ENCODE measurements at regions of chr13 and their contacts with region 1.

Region 1: DNA sequence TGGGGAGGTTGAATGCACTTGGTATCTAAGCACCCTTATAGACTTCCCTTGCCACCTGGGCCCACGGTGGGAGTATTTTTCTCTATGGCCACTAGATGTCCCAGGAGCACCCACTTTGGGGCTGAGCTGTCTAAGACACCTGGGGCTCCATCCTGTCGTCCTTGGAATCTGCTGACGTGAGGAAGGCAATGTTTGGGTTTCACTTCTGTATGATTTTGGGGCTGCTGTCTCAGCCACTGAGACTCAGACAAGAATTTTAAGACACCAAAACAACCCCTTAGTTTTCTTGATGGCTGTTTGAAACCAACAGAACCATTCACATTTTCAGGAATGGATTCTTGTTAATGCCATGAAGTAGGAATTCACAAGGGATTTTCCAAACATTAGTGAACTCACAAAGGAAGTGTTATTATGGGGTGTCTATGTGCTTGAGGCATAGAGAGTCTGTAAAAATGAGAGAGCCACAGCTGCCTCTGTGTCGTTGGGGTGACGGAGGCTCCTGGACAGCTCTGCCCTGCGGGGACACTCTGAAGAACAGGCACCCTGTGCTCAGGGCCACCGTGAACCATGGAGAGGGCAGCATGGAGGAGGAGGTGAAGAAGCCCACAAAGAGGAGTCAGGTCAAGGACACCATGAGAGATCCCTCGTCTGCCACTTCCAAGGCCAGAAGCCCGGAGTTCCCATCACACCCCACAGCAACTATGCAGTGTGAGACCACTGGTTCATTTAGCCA is 106.8 kb upstream of the SPATA13 start:
- DNase-seq: peak; percentile 80
- H3K4me3 Mint-ChIP-seq: no peak overlapping the region
- H3K27ac Mint-ChIP-seq: no peak overlapping the region
- H3K4me1 Mint-ChIP-seq: peaks cover 10% of the 10 kb centered on the region
- H3K27me3 Mint-ChIP-seq: peaks cover 2% of the 10 kb centered on the region

Region 2: GRCh38 chr13:23921451-23921888 is 132.2 kb before region 1 on chr13:
- CTCF ChIA-PET with region 1: interaction called, 3 read pairs
- intact Hi-C with region 1: loop called (anchors 1 kb)
- DNase-seq: peak; percentile 16
- H3K4me3 Mint-ChIP-seq: no peak overlapping the region
- H3K27ac Mint-ChIP-seq: no peak overlapping the region
- H3K4me1 Mint-ChIP-seq: no peaks in the 10 kb centered on the region
- H3K27me3 Mint-ChIP-seq: peaks cover 32% of the 10 kb centered on the region

Region 3: GRCh38 chr13:23966691-23967615 is 86.7 kb before region 1 on chr13:
- CTCF ChIA-PET with region 1: no interaction called
- intact Hi-C with region 1: no loop called
- DNase-seq: peak; percentile 38
- H3K4me3 Mint-ChIP-seq: peak overlapping the region; percentile 29
- H3K27ac Mint-ChIP-seq: peak overlapping the region; percentile 72
- H3K4me1 Mint-ChIP-seq: peaks cover 29% of the 10 kb centered on the region
- H3K27me3 Mint-ChIP-seq: no peaks in the 10 kb centered on the region

Region 4: GRCh38 chr13:23980160-23980551 is 73.5 kb before region 1 on chr13:
- CTCF ChIA-PET with region 1: no interaction called
- intact Hi-C with region 1: no loop called
- DNase-seq: peak; percentile 84
- H3K4me3 Mint-ChIP-seq: peak overlapping the region; percentile 76
- H3K27ac Mint-ChIP-seq: no peak overlapping the region
- H3K4me1 Mint-ChIP-seq: peaks cover 10% of the 10 kb centered on the region
- H3K27me3 Mint-ChIP-seq: peaks cover 18% of the 10 kb centered on the region

Region 5: GRCh38 chr13:24005755-24006281 is 47.9 kb before region 1 on chr13:
- CTCF ChIA-PET with region 1: no interaction called
- intact Hi-C with region 1: no loop called
- DNase-seq: no peak
- H3K4me3 Mint-ChIP-seq: no peak overlapping the region
- H3K27ac Mint-ChIP-seq: no peak overlapping the region
- H3K4me1 Mint-ChIP-seq: no peaks in the 10 kb centered on the region
- H3K27me3 Mint-ChIP-seq: no peaks in the 10 kb centered on the region

Region 6: DNA sequence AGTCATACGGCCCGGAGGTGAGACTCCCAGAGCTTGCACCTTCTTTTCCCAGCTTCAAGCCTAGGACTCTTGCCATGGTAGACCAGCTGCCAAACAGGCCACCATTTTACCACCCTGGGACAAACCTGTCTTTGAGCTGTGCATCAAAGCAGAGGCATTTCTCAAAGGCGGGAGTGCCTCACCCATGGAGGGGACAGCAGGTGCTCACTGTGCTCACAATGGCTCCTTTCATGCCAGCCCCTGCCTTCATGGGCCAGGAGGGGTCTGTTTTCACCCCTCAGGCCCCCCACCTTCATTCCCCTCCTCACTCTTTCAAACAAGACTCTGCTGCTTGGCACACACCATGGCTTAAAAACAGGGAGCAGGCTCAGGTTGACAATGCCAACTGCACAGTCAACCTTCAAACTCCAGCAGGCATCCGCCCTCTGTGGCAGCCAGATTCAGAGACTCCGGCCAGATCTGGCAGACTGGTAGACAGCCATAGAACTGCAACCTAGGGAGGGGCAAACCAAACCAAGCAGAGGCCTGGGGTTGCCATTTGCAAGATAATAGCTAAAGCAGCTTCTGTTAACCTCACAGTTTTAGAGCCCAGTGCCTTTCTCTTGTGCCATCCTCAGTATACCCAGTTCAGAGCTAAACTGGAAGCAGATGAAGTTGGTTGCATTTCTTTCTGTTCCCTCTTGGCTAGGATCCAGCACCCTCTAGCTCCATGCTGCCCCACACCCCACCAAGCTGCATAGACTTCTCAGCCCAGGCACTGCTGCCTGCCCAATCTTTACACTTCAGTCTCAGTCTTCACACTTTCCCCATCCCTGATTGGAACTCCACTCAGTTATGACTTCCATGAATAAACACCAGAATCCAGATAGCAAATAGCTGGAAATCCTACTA is 13.0 kb after region 1 on chr13:
- CTCF ChIA-PET with region 1: interaction called, 20 read pairs
- intact Hi-C with region 1: no loop called
- DNase-seq: no peak
- H3K4me3 Mint-ChIP-seq: no peak overlapping the region
- H3K27ac Mint-ChIP-seq: no peak overlapping the region
- H3K4me1 Mint-ChIP-seq: peaks cover 13% of the 10 kb centered on the region
- H3K27me3 Mint-ChIP-seq: no peaks in the 10 kb centered on the region

Region 7: DNA sequence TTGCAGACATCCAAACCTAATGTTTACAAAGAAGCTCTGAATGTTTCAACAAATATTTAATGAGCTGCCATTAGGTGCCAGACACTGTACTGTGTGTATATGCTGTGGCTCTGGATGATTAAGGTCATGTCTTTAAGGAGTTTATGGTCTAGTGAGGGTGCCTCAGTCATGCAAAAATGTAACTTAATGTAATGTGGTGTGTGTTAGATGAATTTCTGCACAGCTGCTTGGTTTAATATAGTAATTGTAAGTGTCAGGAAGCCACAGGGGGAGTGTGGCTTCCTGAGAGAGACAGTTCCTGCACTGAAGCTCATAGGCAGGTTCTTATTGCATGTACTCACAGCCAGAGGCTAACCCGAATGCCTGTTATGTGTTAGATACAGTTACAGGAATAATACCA is 150.1 kb after region 1 on chr13:
- CTCF ChIA-PET with region 1: interaction called, 10 read pairs
- intact Hi-C with region 1: no loop called
- DNase-seq: no peak
- H3K4me3 Mint-ChIP-seq: no peak overlapping the region
- H3K27ac Mint-ChIP-seq: no peak overlapping the region
- H3K4me1 Mint-ChIP-seq: peaks cover 22% of the 10 kb centered on the region
- H3K27me3 Mint-ChIP-seq: no peaks in the 10 kb centered on the region

Region 8: DNA sequence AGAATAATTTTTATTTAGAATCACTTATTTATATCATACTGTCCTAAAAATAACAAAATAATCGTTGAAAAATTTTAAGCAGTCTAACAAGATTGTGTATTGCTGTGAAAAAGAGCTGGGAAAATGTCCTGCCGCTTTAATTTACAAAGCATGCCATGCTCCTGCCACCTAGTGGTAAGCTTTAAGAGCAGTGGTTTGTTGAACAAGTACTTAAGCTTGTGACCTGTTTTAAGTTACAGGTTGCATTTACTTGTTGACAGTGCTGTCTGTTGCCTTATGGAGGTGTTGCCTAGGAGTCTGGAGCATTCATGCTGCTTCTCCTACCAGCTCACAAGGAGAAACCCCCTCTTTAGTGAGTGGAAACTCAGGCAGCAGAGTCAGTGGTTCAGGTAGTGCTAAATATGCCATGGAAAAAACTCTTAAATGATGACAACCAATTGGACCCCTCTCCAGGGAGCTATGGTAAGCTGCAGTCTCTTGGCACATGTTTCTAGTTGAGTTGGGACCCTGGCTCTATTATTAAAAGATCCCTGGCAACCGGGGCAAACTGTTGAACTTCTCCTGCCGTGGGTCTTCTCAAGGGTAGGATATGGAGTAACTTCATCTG is 175.3 kb after region 1 on chr13:
- CTCF ChIA-PET with region 1: interaction called, 22 read pairs
- intact Hi-C with region 1: loop called (anchors 2 kb)
- DNase-seq: peak; percentile 63
- H3K4me3 Mint-ChIP-seq: no peak overlapping the region
- H3K27ac Mint-ChIP-seq: no peak overlapping the region
- H3K4me1 Mint-ChIP-seq: peaks cover 34% of the 10 kb centered on the region
- H3K27me3 Mint-ChIP-seq: no peaks in the 10 kb centered on the region

Region 9: GRCh38 chr13:24931450-24932251 is 878.0 kb after region 1 on chr13:
- CTCF ChIA-PET with region 1: no interaction called
- intact Hi-C with region 1: no loop called
- DNase-seq: no peak
- H3K4me3 Mint-ChIP-seq: no peak overlapping the region
- H3K27ac Mint-ChIP-seq: no peak overlapping the region
- H3K4me1 Mint-ChIP-seq: peaks cover 2% of the 10 kb centered on the region
- H3K27me3 Mint-ChIP-seq: peaks cover 35% of the 10 kb centered on the region